ENCODE measurements at regions of chr4 and their contacts with region 1.

Region 1: GRCh38 chr4:71184195-71184781 is 154.5 kb upstream of the SLC4A4 start:
- DNase-seq: peak in 1 of 2 donors; percentile 66
- H3K4me3 ChIP-seq: no peak overlapping the region
- H3K27ac ChIP-seq: no peak overlapping the region
- H3K4me1 ChIP-seq: peaks cover 0 to 8% of the 10 kb centered on the region in 2 donors
- H3K27me3 ChIP-seq: no peaks in the 10 kb centered on the region
- CTCF ChIP-seq: peak; percentile 25 to 67 (median 65)

Region 2: DNA sequence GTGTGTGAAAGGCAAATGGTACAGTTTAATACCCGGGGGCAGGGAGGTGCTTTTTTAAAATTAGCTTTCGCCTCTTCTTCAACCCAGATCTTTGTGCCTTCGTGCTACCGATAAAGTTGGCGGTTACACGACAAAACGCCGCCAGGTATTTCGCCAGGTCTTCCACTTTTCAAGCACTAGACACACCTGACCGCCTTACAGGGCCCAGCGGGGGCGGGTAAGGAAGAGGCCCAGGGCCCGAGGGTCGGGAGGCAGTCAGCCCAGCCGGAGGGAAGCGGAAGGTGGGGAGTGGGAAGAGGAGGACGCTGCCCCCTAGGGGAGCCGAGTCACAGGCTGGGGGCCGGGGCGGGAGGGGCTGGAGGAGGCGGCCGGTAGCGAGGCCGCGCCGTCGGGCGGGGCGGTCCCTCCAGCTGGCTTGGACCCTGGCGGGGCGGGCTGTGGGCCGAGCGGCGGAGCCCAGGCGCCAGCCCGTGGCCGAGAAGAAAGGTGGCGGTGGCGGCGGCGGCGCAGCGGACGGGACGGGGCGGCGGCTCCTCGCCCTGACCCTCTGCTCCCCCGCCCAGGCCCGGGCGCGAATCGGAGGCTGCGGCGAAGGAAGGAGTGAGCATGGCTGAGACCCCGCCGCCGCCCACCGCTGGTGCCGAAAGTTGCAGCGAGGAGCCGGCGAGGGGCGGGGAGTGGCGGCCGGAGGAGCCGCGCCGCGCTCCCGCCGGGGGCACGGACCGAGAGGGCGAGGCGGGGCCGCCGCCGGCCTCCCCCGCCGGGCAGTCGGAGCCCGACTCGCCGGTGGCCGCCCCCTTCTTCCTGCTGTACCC is 479.8 kb before region 1 on chr4:
- intact Hi-C with region 1: loop called (anchors 5 kb)
- DNase-seq: peak; percentile 24 to 88
- H3K4me3 ChIP-seq: peak overlapping the region; percentile 89 to 98
- H3K27ac ChIP-seq: peak overlapping the region; percentile 92 to 96
- H3K4me1 ChIP-seq: peaks cover 0 to 11% of the 10 kb centered on the region in 2 donors
- H3K27me3 ChIP-seq: no peaks in the 10 kb centered on the region
- CTCF ChIP-seq: peak; percentile 13 to 54 (median 28)

Region 3: DNA sequence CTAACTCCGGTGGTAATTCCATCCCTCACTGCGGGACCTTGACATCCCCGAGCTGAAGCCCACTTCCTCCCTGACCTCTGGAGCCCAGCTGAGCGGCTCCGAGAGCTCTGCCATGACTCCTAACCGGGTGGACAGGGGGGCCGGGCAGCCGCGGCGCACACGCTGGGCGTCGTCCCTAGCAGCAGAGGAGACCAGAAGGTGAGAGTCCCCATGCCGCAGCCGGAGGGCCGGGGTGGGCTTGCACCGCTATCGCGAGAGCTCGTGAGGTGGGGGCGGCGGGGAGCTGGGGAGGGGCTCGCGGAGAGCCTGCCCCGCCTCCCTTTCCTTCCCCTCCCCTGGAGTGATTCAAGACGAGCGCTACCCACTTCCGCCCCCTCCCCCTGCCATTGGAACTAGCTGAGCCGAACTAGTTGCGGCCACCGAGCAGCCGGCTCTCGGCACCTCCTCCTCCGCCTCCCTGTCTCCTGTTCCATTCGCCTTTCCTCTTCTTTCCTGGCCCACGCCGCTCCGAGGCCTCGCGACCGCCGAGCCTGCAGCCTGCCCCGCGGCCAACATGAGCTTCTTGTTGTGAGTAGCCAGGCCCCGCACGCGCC is 282.2 kb before region 1 on chr4 and contains the start of gene MOB1B:
- intact Hi-C with region 1: loop called (anchors 5 kb)
- DNase-seq: peak; percentile 49 to 91
- H3K4me3 ChIP-seq: peak within 1 kb of the TSS; percentile 83 to 86
- H3K27ac ChIP-seq: peak within 1 kb of the TSS; percentile 77 to 85
- H3K4me1 ChIP-seq: no peaks in the 10 kb centered on the region
- H3K27me3 ChIP-seq: no peaks in the 10 kb centered on the region
- CTCF ChIP-seq: peak; percentile 24 to 57 (median 54)
- total RNA-seq, gene MOB1B: 2.6 TPM

Region 4: GRCh38 chr4:71074452-71075299 is 109.6 kb before region 1 on chr4:
- intact Hi-C with region 1: loop called (anchors 2 kb)
- DNase-seq: peak in 1 of 2 donors; percentile 67
- H3K4me3 ChIP-seq: peak overlapping the region; percentile 29 to 47
- H3K27ac ChIP-seq: peak overlapping the region; percentile 59 to 64
- H3K4me1 ChIP-seq: no peaks in the 10 kb centered on the region
- H3K27me3 ChIP-seq: no peaks in the 10 kb centered on the region
- CTCF ChIP-seq: no peak

Region 5: GRCh38 chr4:71713611-71714203 is 529.4 kb after region 1 on chr4:
- intact Hi-C with region 1: loop called (anchors 5 kb)
- DNase-seq: no peak
- H3K4me3 ChIP-seq: no peak overlapping the region
- H3K27ac ChIP-seq: no peak overlapping the region
- H3K4me1 ChIP-seq: no peaks in the 10 kb centered on the region
- H3K27me3 ChIP-seq: no peaks in the 10 kb centered on the region
- CTCF ChIP-seq: peak; percentile 41 to 64 (median 49)

Measured in ascending aorta (tissue), 2 donors.